ENCODE measurements at regions of chr20 and their contacts with region 1.

Region 1: GRCh38 chr20:45362804-45363610 is at the start of gene SYS1:
- DNase-seq: peak; percentile 97
- ATAC-seq: peak; percentile 92
- H3K4me3 Mint-ChIP-seq: peak within 1 kb of the TSS; percentile 97
- H3K27ac Mint-ChIP-seq: peak within 1 kb of the TSS; percentile 90
- H3K4me1 Mint-ChIP-seq: peaks cover 40% of the 10 kb centered on the region
- H3K27me3 Mint-ChIP-seq: no peaks in the 10 kb centered on the region
- total RNA-seq, gene SYS1: 34.9 to 38.6 TPM

Region 2: GRCh38 chr20:45174434-45175364 is 188.3 kb before region 1 on chr20 and contains the start of gene PI3:
- POLR2A ChIA-PET with region 1: no interaction called
- DNase-seq: no peak
- ATAC-seq: no peak
- H3K4me3 Mint-ChIP-seq: no peak within 1 kb of the TSS
- H3K27ac Mint-ChIP-seq: no peak within 1 kb of the TSS
- H3K4me1 Mint-ChIP-seq: peaks cover 1% of the 10 kb centered on the region
- H3K27me3 Mint-ChIP-seq: peaks cover 24% of the 10 kb centered on the region
- total RNA-seq, gene PI3: not detected

Region 3: GRCh38 chr20:45347936-45348778 is 14.8 kb before region 1 on chr20 and contains the start of gene SDC4:
- POLR2A ChIA-PET with region 1: interaction called, 14 read pairs
- DNase-seq: peak; percentile 67
- ATAC-seq: peak; percentile 78
- H3K4me3 Mint-ChIP-seq: peak within 1 kb of the TSS; percentile 81
- H3K27ac Mint-ChIP-seq: peak within 1 kb of the TSS; percentile 64
- H3K4me1 Mint-ChIP-seq: peaks cover 22% of the 10 kb centered on the region
- H3K27me3 Mint-ChIP-seq: peaks cover 1% of the 10 kb centered on the region
- total RNA-seq, gene SDC4: 7.0 to 7.1 TPM

Region 4: GRCh38 chr20:45415774-45416637 is 53.0 kb after region 1 on chr20 and contains the start of gene PIGT:
- POLR2A ChIA-PET with region 1: interaction called, 17 read pairs
- DNase-seq: peak; percentile 87
- ATAC-seq: peak; percentile 95
- H3K4me3 Mint-ChIP-seq: peak within 1 kb of the TSS; percentile 92
- H3K27ac Mint-ChIP-seq: peak within 1 kb of the TSS; percentile 90
- H3K4me1 Mint-ChIP-seq: peaks cover 26% of the 10 kb centered on the region
- H3K27me3 Mint-ChIP-seq: no peaks in the 10 kb centered on the region
- total RNA-seq, gene PIGT: 64.9 to 72.7 TPM

Region 5: GRCh38 chr20:45436732-45437391 is 73.9 kb after region 1 on chr20:
- POLR2A ChIA-PET with region 1: interaction called, 27 read pairs
- DNase-seq: peak; percentile 92
- ATAC-seq: peak; percentile 98
- H3K4me3 Mint-ChIP-seq: peak overlapping the region; percentile 83
- H3K27ac Mint-ChIP-seq: peak overlapping the region; percentile 54
- H3K4me1 Mint-ChIP-seq: peaks cover 18% of the 10 kb centered on the region
- H3K27me3 Mint-ChIP-seq: no peaks in the 10 kb centered on the region

Measured in activated naive CD8-positive, alpha-beta T cell treated with anti-CD3 and anti-CD28 coated beads, Interleukin-2, amount 10 ng/mL, durations not matched to agents 7 days and 5 days (primary cell).